Mammary epithelial cell (primary cell): ENCODE measurements at regions of chr5 and their contacts with region 1.

Region 1: GRCh38 chr5:60738461-60738860 is 38.5 kb upstream of the DEPDC1B start:
- DNase-seq: no peak
- H3K4me3 ChIP-seq: no peak overlapping the region
- H3K27ac ChIP-seq: no peak overlapping the region
- H3K4me1 ChIP-seq: no peaks in the 10 kb centered on the region
- H3K27me3 ChIP-seq: no peaks in the 10 kb centered on the region
- CTCF ChIP-seq: no peak

Region 2: DNA sequence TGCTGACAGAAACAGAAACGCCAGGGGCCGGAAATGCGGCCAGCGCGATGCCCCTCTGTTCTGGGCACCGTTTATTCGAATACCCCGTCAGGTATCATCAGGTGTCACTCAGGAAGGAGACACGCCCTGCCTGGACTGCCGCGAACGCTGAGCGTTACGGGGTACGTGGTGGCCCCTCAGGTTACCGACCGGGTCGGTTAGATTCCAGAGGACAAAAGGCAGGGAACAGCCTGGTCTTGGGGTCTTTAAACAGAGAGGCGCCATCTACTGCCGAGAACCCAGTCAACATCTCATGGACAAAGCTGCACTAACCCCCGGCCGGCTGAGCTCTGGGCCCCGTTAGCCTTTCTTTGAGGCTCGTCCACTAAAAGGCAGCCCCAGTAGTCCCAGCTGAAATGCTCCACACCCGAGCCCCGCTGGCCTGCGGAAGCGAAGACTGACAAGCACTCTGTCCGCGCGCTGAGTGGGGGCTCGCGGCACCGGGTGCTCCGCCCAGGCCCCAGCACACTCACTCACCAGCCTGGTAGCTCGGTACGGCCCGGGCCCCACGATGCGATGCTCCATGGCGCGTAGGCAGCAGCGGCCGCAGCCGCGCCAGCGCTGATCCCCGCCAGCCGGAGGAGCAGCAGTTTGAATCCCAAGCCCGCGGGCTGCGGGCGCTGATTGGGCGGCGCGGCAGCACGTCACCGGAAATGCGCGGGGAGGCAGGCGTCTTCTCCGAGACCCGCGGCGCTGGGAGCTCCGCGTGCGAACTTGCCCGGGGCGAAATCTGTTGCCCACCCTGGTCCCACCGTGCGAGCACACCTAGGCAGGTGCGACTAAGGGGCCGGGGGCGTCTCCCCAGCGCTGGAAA is 38.7 kb before region 1 on chr5 and contains the start of gene DEPDC1B:
- CTCF ChIA-PET with region 1: no interaction called
- dilution Hi-C with region 1: no loop called
- in situ Hi-C with region 1: no loop called
- intact Hi-C with region 1: no loop called
- DNase-seq: peak; percentile 91
- H3K4me3 ChIP-seq: peak within 1 kb of the TSS; percentile 80 to 90 (median 84)
- H3K27ac ChIP-seq: peak within 1 kb of the TSS; percentile 82
- H3K4me1 ChIP-seq: peaks cover 20% of the 10 kb centered on the region
- H3K27me3 ChIP-seq: no peaks in the 10 kb centered on the region
- CTCF ChIP-seq: peak in 1 of 2 donors; percentile 22
- total RNA-seq, gene DEPDC1B: 12.3 to 17.9 TPM

Region 3: GRCh38 chr5:60754495-60754894 is 16.0 kb after region 1 on chr5:
- CTCF ChIA-PET with region 1: no interaction called
- dilution Hi-C with region 1: no loop called
- in situ Hi-C with region 1: no loop called
- intact Hi-C with region 1: loop called (anchors 2 kb)
- DNase-seq: no peak
- H3K4me3 ChIP-seq: no peak overlapping the region
- H3K27ac ChIP-seq: no peak overlapping the region
- H3K4me1 ChIP-seq: no peaks in the 10 kb centered on the region
- H3K27me3 ChIP-seq: no peaks in the 10 kb centered on the region
- CTCF ChIP-seq: no peak